Activated CD4-positive, alpha-beta T cell treated with anti-CD3 and anti-CD28 coated beads, Interleukin-2, amount 10 ng/mL, durations not matched to agents 24 days and 14 days (primary cell): ENCODE measurements at regions of chrX and their contacts with region 1.

Region 1: GRCh38 chrX:85544609-85545008 is 165.1 kb upstream of the POF1B start:
- DNase-seq: no peak
- H3K4me3 Mint-ChIP-seq: no peak overlapping the region
- H3K27ac Mint-ChIP-seq: no peak overlapping the region
- H3K4me1 Mint-ChIP-seq: no peaks in the 10 kb centered on the region
- H3K27me3 Mint-ChIP-seq: no peaks in the 10 kb centered on the region

Region 2: GRCh38 chrX:84729809-84730208 is 814.8 kb before region 1 on chrX:
- intact Hi-C with region 1: loop called (anchors 5 kb)
- DNase-seq: peak; percentile 57
- H3K4me3 Mint-ChIP-seq: no peak overlapping the region
- H3K27ac Mint-ChIP-seq: no peak overlapping the region
- H3K4me1 Mint-ChIP-seq: no peaks in the 10 kb centered on the region
- H3K27me3 Mint-ChIP-seq: no peaks in the 10 kb centered on the region

Region 3: GRCh38 chrX:84974803-84975202 is 569.8 kb before region 1 on chrX:
- intact Hi-C with region 1: no loop called
- DNase-seq: no peak
- H3K4me3 Mint-ChIP-seq: no peak overlapping the region
- H3K27ac Mint-ChIP-seq: no peak overlapping the region
- H3K4me1 Mint-ChIP-seq: no peaks in the 10 kb centered on the region
- H3K27me3 Mint-ChIP-seq: no peaks in the 10 kb centered on the region

Region 4: GRCh38 chrX:85084770-85085393 is 459.7 kb before region 1 on chrX:
- intact Hi-C with region 1: loop called (anchors 10 kb)
- DNase-seq: peak; percentile 63
- H3K4me3 Mint-ChIP-seq: no peak overlapping the region
- H3K27ac Mint-ChIP-seq: no peak overlapping the region
- H3K4me1 Mint-ChIP-seq: no peaks in the 10 kb centered on the region
- H3K27me3 Mint-ChIP-seq: no peaks in the 10 kb centered on the region

Region 5: DNA sequence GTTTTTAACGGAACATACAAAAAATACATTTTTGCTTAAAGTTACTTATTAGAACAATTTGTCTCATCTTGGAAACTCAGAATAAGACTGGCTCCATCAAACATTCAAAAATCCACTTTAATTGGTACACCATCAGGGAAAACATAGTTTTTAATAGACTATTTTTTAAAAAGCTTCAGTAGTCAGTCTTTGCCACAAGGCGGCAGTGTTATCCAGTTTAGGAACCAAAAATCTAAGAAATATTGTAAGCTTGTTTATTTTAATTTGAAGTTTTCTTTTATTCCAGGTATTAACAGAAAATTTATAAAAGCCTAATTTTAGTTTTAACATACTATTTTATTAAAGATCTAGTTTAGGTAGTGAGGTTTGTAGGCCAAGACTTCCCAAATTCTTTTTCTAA is 433.3 kb before region 1 on chrX:
- intact Hi-C with region 1: loop called (anchors 2 kb)
- DNase-seq: no peak
- H3K4me3 Mint-ChIP-seq: no peak overlapping the region
- H3K27ac Mint-ChIP-seq: no peak overlapping the region
- H3K4me1 Mint-ChIP-seq: no peaks in the 10 kb centered on the region
- H3K27me3 Mint-ChIP-seq: no peaks in the 10 kb centered on the region